Gastrocnemius medialis (tissue), 4 donors: ENCODE measurements at regions of chr17 and their contacts with region 1.

Region 1: GRCh38 chr17:37358830-37359681 is 16.7 kb upstream of the C17orf78 start:
- DNase-seq: peak; percentile 89 to 96
- ATAC-seq: peak; percentile 87
- H3K4me3 ChIP-seq: peak overlapping the region; percentile 86 to 96 (median 94)
- H3K27ac ChIP-seq: peak overlapping the region; percentile 93 to 98 (median 96)
- H3K4me1 ChIP-seq: peaks cover 19 to 22% of the 10 kb centered on the region in 2 donors
- H3K27me3 ChIP-seq: no peaks in the 10 kb centered on the region
- CTCF ChIP-seq: peak in 4 of 5 experiments; percentile 31 to 65 (median 59)
- POLR2A ChIP-seq: peak; percentile 87 to 93

Region 2: GRCh38 chr17:37327341-37328090 is 31.5 kb before region 1 on chr17:
- in situ Hi-C with region 1: no loop called
- intact Hi-C with region 1: loop called (anchors 1 kb)
- DNase-seq: peak; percentile 75 to 79
- ATAC-seq: peak; percentile 97 to 99
- H3K4me3 ChIP-seq: no peak overlapping the region
- H3K27ac ChIP-seq: peak overlapping the region; percentile 79 to 87 (median 84)
- H3K4me1 ChIP-seq: peaks cover 16 to 18% of the 10 kb centered on the region in 2 donors
- H3K27me3 ChIP-seq: no peaks in the 10 kb centered on the region
- CTCF ChIP-seq: no peak
- POLR2A ChIP-seq: no peak